ENCODE measurements at regions of chr2 and their contacts with region 1.

Region 1: DNA sequence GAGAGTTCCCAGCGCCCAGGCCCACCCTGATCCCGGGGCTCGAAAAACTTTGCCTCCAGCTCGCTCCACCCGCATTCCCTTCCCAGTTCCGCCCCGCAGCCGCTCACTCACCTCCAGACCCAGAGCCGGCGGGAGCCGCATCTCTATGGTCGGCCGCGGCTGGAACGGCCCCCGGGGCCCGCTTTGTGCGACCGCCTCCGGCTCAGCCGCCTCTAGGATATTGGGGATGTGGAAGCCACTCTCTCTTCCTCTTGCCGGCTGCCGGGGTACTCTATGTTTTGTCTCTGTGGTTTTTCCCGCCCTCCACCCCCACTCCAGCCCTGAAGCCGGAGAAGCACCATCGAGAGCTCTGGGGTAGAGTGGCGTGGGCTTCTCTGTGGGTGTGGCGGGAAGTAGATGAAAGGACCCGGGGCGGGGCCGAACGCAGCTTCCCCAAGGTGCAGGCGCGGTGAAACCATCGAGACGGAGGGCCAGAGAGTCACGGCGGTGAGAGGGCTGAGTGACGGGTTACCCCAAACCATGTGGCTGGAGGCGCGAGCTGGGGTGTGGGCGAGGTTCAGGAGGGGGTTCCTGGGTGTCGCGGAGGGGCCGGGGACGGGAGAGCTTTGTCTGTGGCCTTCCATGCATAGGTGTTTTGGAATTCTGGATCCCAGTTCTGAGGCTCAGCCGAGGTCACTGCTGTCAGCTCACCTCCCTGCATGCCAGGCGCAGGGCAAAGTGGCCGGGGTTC is at the starts of genes BCS1L and ZNF142:
- DNase-seq: peak; percentile 96
- ATAC-seq: peak; percentile 91
- H3K4me3 Mint-ChIP-seq: peak within 1 kb of the TSS; percentile 93
- H3K27ac Mint-ChIP-seq: peak within 1 kb of the TSS; percentile 90
- H3K4me1 Mint-ChIP-seq: peaks cover 9% of the 10 kb centered on the region
- H3K27me3 Mint-ChIP-seq: no peaks in the 10 kb centered on the region
- CTCF ChIP-seq: no peak
- total RNA-seq, gene BCS1L: 31.4 to 35.4 TPM (median 32.7 TPM) in 3 replicates
- total RNA-seq, gene ZNF142: 25.1 to 33.5 TPM (median 28.7 TPM) in 3 replicates

Region 2: DNA sequence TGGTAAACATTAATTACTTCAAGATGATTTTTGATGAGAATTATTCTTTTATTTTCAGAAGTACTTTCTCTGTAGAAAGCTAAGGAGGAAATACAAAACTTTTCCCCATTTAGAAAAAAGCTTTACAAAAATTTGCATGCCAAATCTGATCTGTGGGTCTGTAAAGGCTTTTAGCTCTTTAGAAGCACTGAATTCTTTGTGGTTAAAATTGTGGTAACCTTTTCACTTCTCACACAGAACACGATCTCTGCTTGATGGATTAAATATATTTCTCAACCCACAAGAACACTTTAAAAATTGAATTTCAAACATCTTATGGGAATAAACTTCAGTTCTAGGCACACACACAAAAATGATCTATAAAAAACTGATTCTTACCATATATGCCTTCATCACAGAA is 176.8 kb before region 1 on chr2:
- CTCF ChIA-PET with region 1: no interaction called
- POLR2A ChIA-PET with region 1: no interaction called
- DNase-seq: no peak
- ATAC-seq: no peak
- H3K4me3 Mint-ChIP-seq: no peak overlapping the region
- H3K27ac Mint-ChIP-seq: no peak overlapping the region
- H3K4me1 Mint-ChIP-seq: no peaks in the 10 kb centered on the region
- H3K27me3 Mint-ChIP-seq: no peaks in the 10 kb centered on the region
- CTCF ChIP-seq: no peak

Region 3: GRCh38 chr2:218648088-218648786 is 11.2 kb before region 1 on chr2:
- CTCF ChIA-PET with region 1: interaction called, 12 read pairs
- POLR2A ChIA-PET with region 1: no interaction called
- DNase-seq: peak; percentile 64
- ATAC-seq: peak; percentile 87
- H3K4me3 Mint-ChIP-seq: no peak overlapping the region
- H3K27ac Mint-ChIP-seq: no peak overlapping the region
- H3K4me1 Mint-ChIP-seq: no peaks in the 10 kb centered on the region
- H3K27me3 Mint-ChIP-seq: no peaks in the 10 kb centered on the region
- CTCF ChIP-seq: peak; percentile 54; the same call in 1 of the 2 replicates

Region 4: DNA sequence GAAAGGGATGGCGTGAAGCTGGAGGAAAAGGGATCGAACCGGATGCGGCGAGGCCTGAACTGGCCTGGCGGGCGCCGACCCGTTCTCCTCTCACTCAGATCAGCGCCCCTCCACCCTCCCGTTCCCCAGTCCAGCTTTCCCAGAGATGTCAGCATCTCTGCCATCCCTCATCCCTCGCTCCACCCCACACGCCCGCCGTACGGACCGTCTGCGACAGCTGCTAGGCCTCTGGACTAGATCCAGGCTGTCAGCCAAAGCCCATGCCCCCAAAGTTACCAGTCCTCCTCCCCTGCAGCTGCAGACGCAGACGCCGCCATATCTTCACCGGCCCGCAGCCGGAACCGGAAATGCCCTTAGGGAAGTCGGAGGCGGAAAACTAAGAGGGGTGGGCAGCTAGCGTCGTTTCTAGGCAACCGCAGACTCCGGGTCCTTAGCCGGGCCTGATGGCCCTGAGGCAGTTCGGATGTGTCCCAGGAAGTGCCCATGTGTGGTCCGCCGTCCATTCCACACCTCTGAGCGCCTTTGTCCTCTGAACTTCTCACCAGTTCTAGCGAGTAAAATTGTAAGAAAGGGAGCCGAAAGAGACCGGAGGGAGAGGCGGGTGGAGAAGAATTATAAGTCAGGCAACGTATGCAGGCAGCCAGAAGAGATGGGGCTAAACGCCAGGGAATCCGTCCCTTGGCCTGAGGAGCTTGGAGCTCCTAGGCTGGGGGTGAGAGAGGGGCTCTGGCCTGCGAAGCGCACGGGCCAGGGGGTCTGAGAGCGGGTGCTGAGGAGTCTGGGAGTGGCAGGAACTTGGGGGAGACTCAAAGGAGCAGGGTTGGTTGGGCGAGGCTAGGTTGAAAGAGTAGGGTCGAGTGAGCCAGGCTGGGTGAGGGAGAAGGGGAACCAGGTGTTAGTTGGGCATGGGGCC is 12.5 kb after region 1 on chr2 and contains the starts of genes RNF25 and STK36:
- CTCF ChIA-PET with region 1: interaction called, 19 read pairs
- POLR2A ChIA-PET with region 1: interaction called, 24 read pairs
- DNase-seq: peak; percentile 85
- ATAC-seq: peak; percentile 96
- H3K4me3 Mint-ChIP-seq: peak within 1 kb of the TSS; percentile 98
- H3K27ac Mint-ChIP-seq: peak within 1 kb of the TSS; percentile 93
- H3K4me1 Mint-ChIP-seq: peaks cover 13% of the 10 kb centered on the region
- H3K27me3 Mint-ChIP-seq: no peaks in the 10 kb centered on the region
- CTCF ChIP-seq: no peak
- total RNA-seq, gene RNF25: 20.3 to 25.1 TPM (median 23.9 TPM) in 3 replicates
- total RNA-seq, gene STK36: 41.0 to 47.7 TPM (median 42.7 TPM) in 3 replicates

Region 5: DNA sequence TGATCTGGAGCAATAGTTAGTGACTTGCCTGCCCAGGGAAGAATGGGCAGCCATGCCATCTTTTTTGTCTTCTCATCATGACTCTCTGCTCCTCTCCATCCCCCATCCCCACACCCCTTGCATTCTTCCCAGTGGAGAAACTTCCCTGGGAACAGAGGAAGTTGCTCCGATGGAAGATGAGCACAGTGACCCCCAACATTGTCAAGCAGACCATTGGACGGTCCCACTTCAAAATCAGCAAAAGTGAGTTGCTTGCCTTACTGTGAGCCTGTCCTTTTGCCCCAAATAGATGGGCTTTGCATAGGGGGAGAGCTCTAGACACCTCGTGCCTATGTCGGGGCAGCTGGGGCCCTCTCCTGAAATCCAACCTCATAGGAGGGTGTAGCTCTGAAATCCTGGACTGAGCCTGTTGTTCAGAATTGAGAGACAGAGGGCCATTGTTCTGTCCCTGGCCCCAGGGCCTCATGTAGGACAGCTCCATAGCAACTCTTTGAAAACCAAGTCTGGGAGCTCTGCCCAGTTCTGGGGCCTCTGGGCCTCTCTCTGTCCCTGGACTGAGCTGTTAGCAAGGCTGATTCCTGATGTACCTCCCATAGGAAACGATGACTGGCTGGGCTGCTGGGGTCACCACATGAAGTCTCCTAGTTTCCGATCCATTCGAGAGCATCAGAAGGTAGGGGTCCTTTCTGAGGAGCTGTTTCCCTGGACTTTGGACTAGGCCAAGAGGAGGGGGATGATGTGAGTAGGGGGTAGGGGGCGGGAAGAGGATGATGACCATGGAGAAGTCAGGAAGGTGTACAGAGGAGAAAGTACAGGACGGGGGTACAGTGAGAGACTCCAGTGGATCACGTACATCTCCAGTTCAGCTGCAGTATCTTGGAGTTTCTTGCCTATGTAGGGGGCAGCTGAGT is 86.4 kb after region 1 on chr2:
- CTCF ChIA-PET with region 1: no interaction called
- POLR2A ChIA-PET with region 1: no interaction called
- DNase-seq: no peak
- ATAC-seq: no peak
- H3K4me3 Mint-ChIP-seq: no peak overlapping the region
- H3K27ac Mint-ChIP-seq: no peak overlapping the region
- H3K4me1 Mint-ChIP-seq: no peaks in the 10 kb centered on the region
- H3K27me3 Mint-ChIP-seq: no peaks in the 10 kb centered on the region
- CTCF ChIP-seq: no peak

Region 6: GRCh38 chr2:218773881-218774280 is 114.5 kb after region 1 on chr2:
- CTCF ChIA-PET with region 1: no interaction called
- POLR2A ChIA-PET with region 1: no interaction called
- DNase-seq: no peak
- ATAC-seq: no peak
- H3K4me3 Mint-ChIP-seq: no peak overlapping the region
- H3K27ac Mint-ChIP-seq: no peak overlapping the region
- H3K4me1 Mint-ChIP-seq: no peaks in the 10 kb centered on the region
- H3K27me3 Mint-ChIP-seq: peaks cover 14% of the 10 kb centered on the region
- CTCF ChIP-seq: no peak

Measured in WTC11 (cell line).